Activated CD8-positive, alpha-beta T cell treated with anti-CD3 and anti-CD28 coated beads for 36 hours (primary cell): ENCODE measurements at regions of chr19 and their contacts with region 1.

Region 1: DNA sequence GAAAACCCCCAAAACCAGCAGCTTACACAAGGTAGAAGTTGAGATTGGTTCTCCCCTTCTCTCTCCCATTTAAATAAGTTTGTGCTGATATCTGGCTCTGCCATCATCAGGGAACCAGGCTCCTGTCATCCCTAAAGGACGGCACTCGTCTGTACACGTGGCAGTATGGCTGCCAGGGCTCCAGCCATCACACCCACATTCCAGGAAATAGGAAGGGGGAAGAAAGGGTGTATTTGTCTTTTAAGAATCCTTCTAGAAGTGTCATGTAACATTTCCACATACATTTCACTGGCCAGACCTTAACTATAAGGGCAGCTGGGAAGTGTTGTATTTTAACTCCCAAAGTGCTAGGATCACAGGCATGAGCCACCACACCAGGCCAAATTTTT is 10.1 kb downstream of the SPC24 start:
- DNase-seq: no peak
- ATAC-seq: no peak
- H3K4me3 Mint-ChIP-seq: no peak overlapping the region
- H3K27ac Mint-ChIP-seq: no peak overlapping the region
- H3K4me1 Mint-ChIP-seq: peaks cover 9% of the 10 kb centered on the region
- H3K27me3 Mint-ChIP-seq: no peaks in the 10 kb centered on the region
- CTCF ChIP-seq: no peak

Region 2: GRCh38 chr19:11073568-11073967 is 72.0 kb before region 1 on chr19:
- CTCF ChIA-PET with region 1: no interaction called
- POLR2A ChIA-PET with region 1: no interaction called
- intact Hi-C with region 1: no loop called
- DNase-seq: no peak
- ATAC-seq: no peak
- H3K4me3 Mint-ChIP-seq: no peak overlapping the region
- H3K27ac Mint-ChIP-seq: no peak overlapping the region
- H3K4me1 Mint-ChIP-seq: peaks cover 3% of the 10 kb centered on the region
- H3K27me3 Mint-ChIP-seq: no peaks in the 10 kb centered on the region
- CTCF ChIP-seq: no peak

Region 3: DNA sequence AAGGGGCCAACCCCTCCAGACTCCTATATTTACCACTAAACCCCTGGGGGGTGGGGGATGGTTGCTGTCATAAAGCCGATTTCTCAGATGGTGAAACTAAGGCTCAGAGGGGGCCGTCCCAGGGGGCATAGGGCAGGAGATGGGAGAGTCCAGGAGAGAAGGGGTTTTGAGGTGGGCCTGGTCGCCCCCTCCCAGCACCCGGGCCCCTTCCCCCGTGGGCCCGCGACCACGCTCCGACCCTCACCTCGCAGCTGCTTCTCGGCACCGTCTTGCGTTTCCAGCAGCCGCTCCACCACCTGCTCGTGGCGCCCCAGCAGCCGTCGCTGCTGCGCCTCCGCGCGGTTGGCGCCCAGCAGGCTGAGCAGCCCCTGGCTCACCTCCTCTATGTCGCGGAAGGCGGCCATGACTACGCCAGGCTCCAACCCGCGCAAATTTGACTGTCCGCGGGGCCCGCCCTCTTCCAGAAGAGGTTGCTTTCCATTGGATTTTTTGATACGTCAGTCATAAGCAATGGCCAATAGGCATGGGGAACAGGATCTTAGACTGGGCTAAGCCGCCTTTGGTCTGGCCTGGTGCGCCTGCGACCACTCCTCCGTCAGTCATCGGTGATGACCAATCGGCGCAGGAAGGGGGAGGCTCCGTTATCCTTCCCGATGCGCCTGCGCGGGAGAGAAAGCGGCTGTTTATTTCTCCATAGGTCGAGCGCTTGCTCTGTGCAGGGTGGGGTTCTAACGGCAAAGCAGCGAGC is 10.0 kb after region 1 on chr19 and contains the start of gene SPC24:
- CTCF ChIA-PET with region 1: no interaction called
- POLR2A ChIA-PET with region 1: interaction called, 21 read pairs
- intact Hi-C with region 1: no loop called
- DNase-seq: peak; percentile 96
- ATAC-seq: peak; percentile 99
- H3K4me3 Mint-ChIP-seq: peak within 1 kb of the TSS; percentile 91
- H3K27ac Mint-ChIP-seq: peak within 1 kb of the TSS; percentile 84
- H3K4me1 Mint-ChIP-seq: peaks cover 5% of the 10 kb centered on the region
- H3K27me3 Mint-ChIP-seq: no peaks in the 10 kb centered on the region
- CTCF ChIP-seq: no peak
- total RNA-seq, gene SPC24: 60.5 to 70.9 TPM

Region 4: GRCh38 chr19:11209839-11210655 is 64.5 kb after region 1 on chr19:
- CTCF ChIA-PET with region 1: no interaction called
- POLR2A ChIA-PET with region 1: no interaction called
- intact Hi-C with region 1: no loop called
- DNase-seq: no peak
- ATAC-seq: no peak
- H3K4me3 Mint-ChIP-seq: no peak overlapping the region
- H3K27ac Mint-ChIP-seq: no peak overlapping the region
- H3K4me1 Mint-ChIP-seq: no peaks in the 10 kb centered on the region
- H3K27me3 Mint-ChIP-seq: peaks cover 2% of the 10 kb centered on the region
- CTCF ChIP-seq: no peak